Activated B cell treated with CpG ODN at 0.5 μM for 24 hours (primary cell): ENCODE measurements at regions of chr3 and their contacts with region 1.

Region 1: GRCh38 chr3:138923531-138923994 is 23.4 kb downstream of the FOXL2 start:
- DNase-seq: peak; percentile 71
- ATAC-seq: peak; percentile 92
- H3K4me3 Mint-ChIP-seq: no peak overlapping the region
- H3K27ac Mint-ChIP-seq: no peak overlapping the region
- H3K4me1 Mint-ChIP-seq: no peaks in the 10 kb centered on the region
- H3K27me3 Mint-ChIP-seq: peaks cover 28% of the 10 kb centered on the region
- CTCF ChIP-seq: peak; percentile 86

Region 2: GRCh38 chr3:138329127-138329983 is 594.2 kb before region 1 on chr3 and contains the start of gene NME9:
- CTCF ChIA-PET with region 1: no interaction called
- POLR2A ChIA-PET with region 1: no interaction called
- intact Hi-C with region 1: loop called (anchors 1 kb)
- DNase-seq: peak; percentile 56
- ATAC-seq: peak; percentile 90
- H3K4me3 Mint-ChIP-seq: peak within 1 kb of the TSS; percentile 88
- H3K27ac Mint-ChIP-seq: no peak within 1 kb of the TSS
- H3K4me1 Mint-ChIP-seq: peaks cover 13% of the 10 kb centered on the region
- H3K27me3 Mint-ChIP-seq: peaks cover 25% of the 10 kb centered on the region
- CTCF ChIP-seq: no peak
- total RNA-seq, gene NME9: not detected in 2 replicates

Region 3: GRCh38 chr3:138479438-138479863 is 444.1 kb before region 1 on chr3:
- CTCF ChIA-PET with region 1: interaction called, 23 read pairs
- POLR2A ChIA-PET with region 1: no interaction called
- intact Hi-C with region 1: loop called (anchors 1 kb)
- DNase-seq: no peak
- ATAC-seq: peak; percentile 34
- H3K4me3 Mint-ChIP-seq: no peak overlapping the region
- H3K27ac Mint-ChIP-seq: no peak overlapping the region
- H3K4me1 Mint-ChIP-seq: no peaks in the 10 kb centered on the region
- H3K27me3 Mint-ChIP-seq: peaks cover 12% of the 10 kb centered on the region
- CTCF ChIP-seq: no peak

Region 4: GRCh38 chr3:138686771-138687221 is 236.8 kb before region 1 on chr3:
- CTCF ChIA-PET with region 1: interaction called, 11 read pairs
- POLR2A ChIA-PET with region 1: no interaction called
- intact Hi-C with region 1: no loop called
- DNase-seq: no peak
- ATAC-seq: peak; percentile 77
- H3K4me3 Mint-ChIP-seq: peak overlapping the region; percentile 44
- H3K27ac Mint-ChIP-seq: peak overlapping the region; percentile 92
- H3K4me1 Mint-ChIP-seq: peaks cover 38% of the 10 kb centered on the region
- H3K27me3 Mint-ChIP-seq: no peaks in the 10 kb centered on the region
- CTCF ChIP-seq: no peak

Region 5: DNA sequence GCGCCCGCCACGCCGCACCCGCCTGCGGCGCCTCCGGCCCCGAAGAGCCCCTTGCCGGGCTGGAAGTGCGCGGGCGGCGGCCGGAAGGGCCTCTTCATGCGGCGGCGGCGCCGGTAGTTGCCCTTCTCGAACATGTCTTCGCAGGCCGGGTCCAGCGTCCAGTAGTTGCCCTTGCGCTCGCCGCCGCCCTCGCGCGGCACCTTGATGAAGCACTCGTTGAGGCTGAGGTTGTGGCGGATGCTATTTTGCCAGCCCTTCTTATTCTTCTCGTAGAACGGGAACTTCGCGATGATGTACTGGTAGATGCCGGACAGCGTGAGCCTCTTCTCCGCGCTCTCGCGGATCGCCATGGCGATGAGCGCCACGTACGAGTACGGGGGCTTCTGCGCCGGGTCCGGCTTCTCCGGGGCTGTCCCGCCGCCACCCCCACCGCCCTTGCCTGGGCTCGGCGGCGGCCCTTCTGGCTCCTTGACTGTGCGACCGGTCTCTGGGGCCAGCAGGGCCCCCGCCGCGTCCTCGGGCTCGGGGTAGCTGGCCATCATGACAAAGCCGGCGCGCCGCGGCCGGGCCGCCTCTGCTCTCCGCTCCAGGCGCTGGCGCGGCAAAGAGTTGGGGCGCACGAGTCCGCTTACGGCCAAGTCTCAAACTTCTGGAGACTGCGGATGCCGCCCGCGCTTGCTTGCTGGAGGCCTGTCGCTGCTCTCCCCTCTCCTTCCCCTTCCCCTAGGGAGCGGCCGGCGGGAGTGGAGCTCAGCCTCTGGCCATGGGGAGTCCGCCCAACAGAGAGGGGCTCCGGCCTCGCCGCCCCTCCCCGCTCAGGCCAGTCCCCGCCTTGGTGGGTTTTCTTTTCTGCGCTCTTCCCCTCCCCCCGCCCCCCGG is 22.9 kb after region 1 on chr3:
- CTCF ChIA-PET with region 1: interaction called, 5 read pairs
- POLR2A ChIA-PET with region 1: interaction called, 15 read pairs
- intact Hi-C with region 1: no loop called
- DNase-seq: peak; percentile 26
- ATAC-seq: peak; percentile 28
- H3K4me3 Mint-ChIP-seq: peak overlapping the region; percentile 75
- H3K27ac Mint-ChIP-seq: no peak overlapping the region
- H3K4me1 Mint-ChIP-seq: peaks cover 41% of the 10 kb centered on the region
- H3K27me3 Mint-ChIP-seq: peaks cover 72% of the 10 kb centered on the region
- CTCF ChIP-seq: no peak